A549 (cell line): ENCODE measurements at regions of chr12 and their contacts with region 1.

Region 1: GRCh38 chr12:124917135-124917840 is 2.8 kb upstream of the UBC start:
- DNase-seq: peak; percentile 77 to 100
- ATAC-seq: peak; percentile 76 to 81
- H3K4me3 ChIP-seq: peak overlapping the region; percentile 42
- H3K27ac ChIP-seq: peak overlapping the region; percentile 97 to 98
- H3K4me1 ChIP-seq: peaks cover 47% of the 10 kb centered on the region
- CTCF ChIP-seq: no peak
- EP300 ChIP-seq: peak; percentile 14 to 70; a peak in 2 of 5 replicates
- POLR2A ChIP-seq: no peak
- RAD21 ChIP-seq: peak; percentile 10 to 17; a peak in 2 of 5 replicates

Region 2: DNA sequence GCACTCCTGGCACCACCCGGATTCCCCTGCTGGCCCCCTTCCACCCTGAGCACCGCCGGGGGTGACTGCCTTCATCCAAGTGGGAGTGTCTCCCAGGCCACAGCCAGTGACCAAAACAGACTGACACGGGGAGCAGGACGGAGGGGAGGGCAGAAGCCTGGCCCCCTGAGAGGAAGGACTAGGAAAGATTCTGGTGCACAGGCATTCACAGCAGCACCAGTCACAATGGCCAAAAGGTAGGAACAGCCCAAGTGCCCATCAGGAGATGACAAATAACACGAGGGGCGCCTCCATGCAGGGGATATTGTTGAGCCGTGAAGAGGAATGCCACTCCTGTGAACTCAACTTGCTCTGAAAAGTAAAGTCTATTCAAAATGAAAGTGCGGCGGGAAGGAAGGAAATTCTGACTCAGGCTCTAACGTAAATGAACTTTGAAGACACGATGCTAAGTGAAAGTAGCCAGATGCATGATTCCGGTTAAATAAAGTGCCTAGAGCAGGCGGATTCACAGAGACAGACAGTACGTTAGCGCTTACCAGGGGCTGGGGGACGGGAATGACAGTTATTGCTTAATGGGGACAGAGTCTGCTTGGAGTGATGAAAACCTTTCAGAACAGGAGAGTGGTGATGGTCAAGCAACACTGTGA is 203.7 kb before region 1 on chr12:
- CTCF ChIA-PET with region 1: no interaction called
- POLR2A ChIA-PET with region 1: no interaction called
- DNase-seq: no peak
- ATAC-seq: no peak
- H3K4me3 ChIP-seq: no peak overlapping the region
- H3K27ac ChIP-seq: peak overlapping the region in 1 of 2 experiments; percentile 32; a peak in 2 of 6 replicates
- H3K4me1 ChIP-seq: peaks cover 11% of the 10 kb centered on the region
- CTCF ChIP-seq: no peak
- EP300 ChIP-seq: no peak
- POLR2A ChIP-seq: no peak
- RAD21 ChIP-seq: no peak

Region 3: GRCh38 chr12:124837958-124838803 is 79.1 kb before region 1 on chr12:
- CTCF ChIA-PET with region 1: interaction called, 3 read pairs
- POLR2A ChIA-PET with region 1: interaction called, 16 read pairs
- DNase-seq: peak; percentile 94 to 99
- ATAC-seq: peak; percentile 94
- H3K4me3 ChIP-seq: no peak overlapping the region
- H3K27ac ChIP-seq: peak overlapping the region; percentile 84 to 93
- H3K4me1 ChIP-seq: peaks cover 69% of the 10 kb centered on the region
- CTCF ChIP-seq: no peak
- EP300 ChIP-seq: peak; percentile 32 to 80; a peak in 2 of 5 replicates
- POLR2A ChIP-seq: no peak
- RAD21 ChIP-seq: peak in 1 of 2 experiments; percentile 49; a peak in 4 of 5 replicates

Region 4: GRCh38 chr12:124863416-124864325 is 53.6 kb before region 1 on chr12 and contains the start of gene SCARB1:
- CTCF ChIA-PET with region 1: no interaction called
- POLR2A ChIA-PET with region 1: no interaction called
- DNase-seq: peak; percentile 85
- ATAC-seq: peak; percentile 78 to 84
- H3K4me3 ChIP-seq: peak within 1 kb of the TSS; percentile 72
- H3K27ac ChIP-seq: peak within 1 kb of the TSS; percentile 85 to 96
- H3K4me1 ChIP-seq: peaks cover 35% of the 10 kb centered on the region
- CTCF ChIP-seq: no peak
- EP300 ChIP-seq: no peak
- POLR2A ChIP-seq: peak; percentile 92
- RAD21 ChIP-seq: peak; percentile 5 to 50; a peak in 4 of 5 replicates
- polyA plus RNA-seq, gene SCARB1: 81.1 and 111 TPM in 2 replicates

Region 5: DNA sequence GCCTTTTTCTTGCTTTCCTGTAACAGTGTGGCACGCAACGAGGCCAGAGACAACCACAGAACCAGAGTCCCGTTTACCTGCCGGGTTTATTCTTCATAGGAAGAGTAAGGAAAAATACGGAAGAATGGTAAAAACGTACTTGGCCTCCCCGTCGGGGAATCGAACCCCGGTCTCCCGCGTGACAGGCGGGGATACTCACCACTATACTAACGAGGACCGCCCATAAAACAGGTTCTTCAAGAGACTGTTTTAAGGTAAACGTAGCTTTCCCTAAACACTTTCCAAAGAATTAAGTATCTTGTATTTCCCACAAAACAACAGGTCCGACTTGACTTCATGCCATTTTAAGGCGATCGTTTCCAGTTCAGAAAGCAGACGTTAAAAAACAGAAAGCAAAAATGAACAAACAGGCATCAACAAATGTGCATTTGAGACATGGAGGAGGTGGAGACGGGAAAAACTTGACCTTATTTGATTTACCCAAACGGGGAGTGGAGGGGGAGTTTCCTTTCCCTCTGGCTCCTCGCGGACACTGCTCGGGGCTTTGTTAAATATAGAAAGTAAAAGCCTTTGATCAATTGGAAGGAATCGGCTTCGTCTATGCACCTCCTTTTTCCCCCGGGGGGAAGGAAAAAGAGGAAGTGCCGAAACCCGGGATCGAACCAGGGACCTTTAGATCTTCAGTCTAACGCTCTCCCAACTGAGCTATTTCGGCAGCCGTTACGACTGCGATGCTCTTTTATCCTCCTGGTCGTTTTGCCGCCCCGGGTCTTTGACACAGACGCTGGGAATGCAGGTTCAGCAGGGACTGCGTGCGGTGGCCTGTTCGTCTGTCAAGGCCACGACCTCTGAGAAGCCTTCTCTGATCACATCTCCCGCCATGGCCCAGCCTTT is 10.2 kb after region 1 on chr12:
- CTCF ChIA-PET with region 1: interaction called, 14 read pairs
- POLR2A ChIA-PET with region 1: interaction called, 55 read pairs
- DNase-seq: peak; percentile 81 to 95
- ATAC-seq: peak; percentile 76 to 77
- H3K4me3 ChIP-seq: peak overlapping the region; percentile 59
- H3K27ac ChIP-seq: peak overlapping the region; percentile 97 to 98
- H3K4me1 ChIP-seq: peaks cover 34% of the 10 kb centered on the region
- CTCF ChIP-seq: no peak
- EP300 ChIP-seq: no peak
- POLR2A ChIP-seq: no peak
- RAD21 ChIP-seq: no peak

Region 6: DNA sequence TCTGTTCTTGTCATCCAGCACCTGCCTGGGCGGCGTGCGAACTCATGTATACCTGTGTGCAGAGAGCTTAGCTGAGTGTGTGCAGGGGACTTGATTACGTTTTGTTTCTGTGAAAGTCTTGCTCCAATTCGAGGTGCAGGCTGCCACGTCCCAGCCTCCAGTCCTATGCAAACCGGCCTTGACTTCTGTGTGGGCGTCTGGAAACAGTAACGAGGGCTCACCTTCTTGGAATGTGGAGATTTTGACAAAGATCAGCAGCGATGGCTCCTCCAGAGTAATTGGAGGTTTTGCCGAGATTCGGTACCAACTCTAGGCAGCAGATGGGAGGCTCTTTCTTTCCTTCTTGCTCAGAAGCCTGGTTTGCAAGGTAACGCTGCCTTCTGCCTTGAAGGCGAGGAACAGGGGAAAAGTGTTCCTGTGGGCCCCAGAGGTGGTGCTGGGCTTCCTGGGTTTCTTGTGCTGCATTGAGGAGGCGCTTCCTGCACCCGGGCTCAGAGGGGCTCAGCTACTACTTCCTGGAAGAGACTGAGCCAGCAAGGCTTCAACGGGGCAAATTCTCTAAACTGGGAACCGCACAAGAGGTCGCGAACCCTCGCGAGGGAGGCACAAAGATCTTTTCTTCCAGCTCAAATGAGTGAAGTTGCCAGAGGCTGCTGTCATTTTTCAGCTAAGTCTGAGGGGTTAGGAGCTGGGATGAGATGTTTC is 396.9 kb after region 1 on chr12:
- CTCF ChIA-PET with region 1: no interaction called
- POLR2A ChIA-PET with region 1: no interaction called
- DNase-seq: no peak
- ATAC-seq: peak in 1 of 2 experiments; percentile 32; a peak in 2 of 6 replicates
- H3K4me3 ChIP-seq: no peak overlapping the region
- H3K27ac ChIP-seq: no peak overlapping the region
- H3K4me1 ChIP-seq: no peaks in the 10 kb centered on the region
- CTCF ChIP-seq: no peak
- EP300 ChIP-seq: no peak
- POLR2A ChIP-seq: no peak
- RAD21 ChIP-seq: no peak